HepG2 (cell line): ENCODE measurements at regions of chr6 and their contacts with region 1.

Region 1: DNA sequence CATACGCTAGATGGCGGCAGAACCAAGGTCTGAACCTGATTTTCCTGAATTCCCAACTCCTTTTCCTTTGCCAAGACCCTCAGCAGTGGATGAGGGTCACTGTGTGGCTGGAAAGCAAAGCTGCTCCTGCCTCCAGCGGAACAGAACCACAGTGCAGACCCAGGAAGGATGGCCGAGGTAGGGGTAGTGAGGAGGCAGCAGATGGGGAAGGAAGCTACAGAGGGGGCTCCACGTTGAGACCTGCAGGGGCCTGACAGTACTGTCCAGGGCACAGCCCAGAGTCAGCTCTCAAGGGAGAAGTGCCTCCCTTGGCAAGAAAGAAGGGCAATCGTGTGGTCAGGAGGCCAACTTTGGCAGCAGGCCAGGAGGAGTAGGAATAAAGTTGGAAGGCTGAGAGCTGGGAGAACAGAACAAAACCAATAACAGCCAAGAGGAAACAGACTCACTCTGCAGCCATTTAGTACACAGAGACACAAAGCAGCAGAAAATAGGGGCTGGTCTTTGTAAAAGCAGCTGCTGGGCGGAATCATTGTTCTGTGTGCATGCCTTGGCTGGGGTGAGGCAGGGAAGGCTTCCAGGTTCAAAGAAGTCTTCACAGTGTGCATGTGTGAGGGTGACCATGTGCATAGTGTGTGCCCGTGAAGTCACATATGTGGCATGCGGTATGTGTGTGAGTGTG is 3.1 kb downstream of the GABRR2 start:
- DNase-seq: peak; percentile 40
- ATAC-seq: peak; percentile 83
- H3K4me3 ChIP-seq: peak overlapping the region in 1 of 3 experiments; percentile 52; a peak in 1 of 6 replicates
- H3K27ac ChIP-seq: no peak overlapping the region
- H3K4me1 ChIP-seq: peaks cover 18% of the 10 kb centered on the region
- H3K27me3 ChIP-seq: 0 out of 5 replicates have a peak, but pooled peaks cover 0 to 4% of the 10 kb centered on the region in 2 experiments
- CTCF ChIP-seq: peak; percentile 95
- EP300 ChIP-seq: no peak
- POLR2A ChIP-seq: no peak
- RAD21 ChIP-seq: no peak; the same call in 1 of the 2 replicates

Region 2: DNA sequence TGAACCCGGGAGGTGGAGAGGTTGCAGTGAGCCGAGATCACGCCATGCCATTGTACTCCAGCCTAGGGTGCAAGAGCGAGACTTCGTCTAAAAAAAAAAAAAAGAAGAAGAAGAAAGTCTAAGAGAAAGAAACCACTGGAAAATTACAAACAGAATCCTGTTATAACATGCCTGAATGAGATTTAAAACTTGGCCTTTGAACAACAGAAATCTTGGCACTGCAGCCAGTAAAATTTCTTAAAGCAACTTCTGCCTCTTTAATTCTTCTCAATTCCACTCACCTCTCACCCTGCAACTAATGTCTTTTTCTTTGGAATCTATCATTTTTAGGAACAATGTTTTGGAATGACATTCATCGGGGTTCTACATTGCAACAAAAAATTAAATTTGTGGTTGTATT is 139.9 kb before region 1 on chr6:
- CTCF ChIA-PET with region 1: no interaction called
- POLR2A ChIA-PET with region 1: no interaction called
- in situ Hi-C with region 1: no loop called
- intact Hi-C with region 1: no loop called
- DNase-seq: no peak
- ATAC-seq: no peak
- H3K4me3 ChIP-seq: no peak overlapping the region
- H3K27ac ChIP-seq: no peak overlapping the region
- H3K4me1 ChIP-seq: no peaks in the 10 kb centered on the region
- H3K27me3 ChIP-seq: no peaks in the 10 kb centered on the region
- CTCF ChIP-seq: no peak
- EP300 ChIP-seq: no peak
- POLR2A ChIP-seq: no peak
- RAD21 ChIP-seq: no peak

Region 3: DNA sequence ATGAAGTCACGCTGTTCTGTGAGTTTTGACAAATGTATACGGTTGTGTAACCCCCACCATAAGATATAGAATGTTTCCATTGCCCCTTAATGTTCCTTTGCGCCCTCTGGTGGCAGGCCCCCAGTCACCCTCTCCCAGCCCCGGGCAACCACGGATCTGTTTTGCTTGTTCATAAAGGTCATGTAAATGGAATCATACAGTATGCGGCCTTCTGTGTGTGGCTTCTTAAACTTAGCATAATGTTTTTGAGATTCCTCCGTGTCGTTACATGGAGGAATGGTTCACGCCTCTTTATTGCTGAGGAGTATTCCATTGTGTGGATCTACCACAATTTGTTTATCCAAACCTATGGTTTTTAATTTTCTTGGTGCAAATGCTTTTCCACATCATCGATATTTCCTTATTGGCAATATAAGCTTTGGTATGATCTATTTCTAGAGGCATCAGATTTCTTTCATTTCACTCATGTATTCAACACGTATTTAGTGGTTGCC is 298.2 kb after region 1 on chr6:
- CTCF ChIA-PET with region 1: no interaction called
- POLR2A ChIA-PET with region 1: no interaction called
- in situ Hi-C with region 1: no loop called
- intact Hi-C with region 1: loop called (anchors 1 kb)
- DNase-seq: peak; percentile 40
- ATAC-seq: peak; percentile 93
- H3K4me3 ChIP-seq: no peak overlapping the region
- H3K27ac ChIP-seq: no peak overlapping the region
- H3K4me1 ChIP-seq: no peaks in the 10 kb centered on the region
- H3K27me3 ChIP-seq: no peaks in the 10 kb centered on the region
- CTCF ChIP-seq: peak; percentile 82
- EP300 ChIP-seq: no peak
- POLR2A ChIP-seq: no peak
- RAD21 ChIP-seq: peak; percentile 54; the same call in 1 of the 2 replicates